CD8-positive, alpha-beta T cell (primary cell): ENCODE measurements at regions of chr20 and their contacts with region 1.

Region 1: GRCh38 chr20:63657937-63658748 is at the start of gene RTEL1:
- DNase-seq: peak; percentile 81 to 97 (median 88)
- ATAC-seq: peak; percentile 83
- H3K4me3 ChIP-seq: peak within 1 kb of the TSS; percentile 76 to 97
- H3K4me3 Mint-ChIP-seq: peak within 1 kb of the TSS; percentile 93
- H3K27ac ChIP-seq: peak within 1 kb of the TSS; percentile 72 to 75
- H3K27ac Mint-ChIP-seq: peak within 1 kb of the TSS; percentile 91
- H3K4me1 ChIP-seq: peaks cover 35% of the 10 kb centered on the region
- H3K4me1 Mint-ChIP-seq: peaks cover 36% of the 10 kb centered on the region
- H3K27me3 ChIP-seq: no peaks in the 10 kb centered on the region
- H3K27me3 Mint-ChIP-seq: no peaks in the 10 kb centered on the region
- CTCF ChIP-seq: no peak
- total RNA-seq, gene RTEL1: 21.4 to 24.9 TPM

Region 2: DNA sequence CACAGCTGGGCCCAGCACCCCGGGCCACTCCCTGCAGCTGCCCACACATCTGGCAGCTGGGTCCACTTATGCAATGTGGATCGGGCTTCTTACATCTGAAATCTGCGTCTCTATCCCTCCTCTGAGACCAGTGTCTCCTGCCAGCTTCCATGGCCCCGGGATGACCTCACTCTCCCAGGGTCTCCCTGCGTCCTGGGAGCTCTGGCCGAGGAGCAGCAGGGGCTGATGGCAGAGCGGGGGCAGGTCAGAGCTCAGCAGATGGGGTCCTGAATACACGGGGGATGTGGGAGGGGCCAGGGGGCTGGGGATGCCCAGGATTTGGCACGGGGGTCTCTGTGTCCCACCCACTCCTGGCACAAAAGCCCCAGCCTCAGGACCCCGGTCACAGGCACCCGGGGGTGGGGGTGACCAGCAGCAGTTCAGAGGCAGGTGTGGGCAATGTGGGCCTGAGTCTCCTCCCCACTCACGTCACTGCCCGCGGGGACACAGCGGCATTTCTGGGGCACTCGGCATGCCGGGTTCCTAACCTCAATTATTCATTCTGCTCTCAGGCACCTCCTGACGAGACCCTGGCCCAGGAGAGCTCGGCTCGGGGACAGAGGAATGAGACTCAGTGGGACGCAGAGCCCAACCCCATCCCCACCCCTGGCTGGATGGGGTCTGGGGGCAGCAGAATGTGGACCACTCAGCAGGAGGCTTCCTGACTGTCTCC is 313.4 kb before region 1 on chr20:
- CTCF ChIA-PET with region 1: no interaction called
- POLR2A ChIA-PET with region 1: no interaction called
- intact Hi-C with region 1: no loop called
- DNase-seq: peak in 1 of 9 experiments; percentile 17
- ATAC-seq: no peak
- H3K4me3 ChIP-seq: no peak overlapping the region
- H3K4me3 Mint-ChIP-seq: no peak overlapping the region
- H3K27ac ChIP-seq: no peak overlapping the region
- H3K27ac Mint-ChIP-seq: no peak overlapping the region
- H3K4me1 ChIP-seq: no peaks in the 10 kb centered on the region
- H3K4me1 Mint-ChIP-seq: no peaks in the 10 kb centered on the region
- H3K27me3 ChIP-seq: no peaks in the 10 kb centered on the region
- H3K27me3 Mint-ChIP-seq: peaks cover 10% of the 10 kb centered on the region
- CTCF ChIP-seq: no peak

Region 3: GRCh38 chr20:63529861-63530788 is 128.0 kb before region 1 on chr20:
- CTCF ChIA-PET with region 1: no interaction called
- POLR2A ChIA-PET with region 1: no interaction called
- intact Hi-C with region 1: no loop called
- DNase-seq: peak in 3 of 9 experiments; percentile 3 to 9 (median 6)
- ATAC-seq: no peak
- H3K4me3 ChIP-seq: no peak overlapping the region
- H3K4me3 Mint-ChIP-seq: no peak overlapping the region
- H3K27ac ChIP-seq: no peak overlapping the region
- H3K27ac Mint-ChIP-seq: no peak overlapping the region
- H3K4me1 ChIP-seq: no peaks in the 10 kb centered on the region
- H3K4me1 Mint-ChIP-seq: peaks cover 3% of the 10 kb centered on the region
- H3K27me3 ChIP-seq: no peaks in the 10 kb centered on the region
- H3K27me3 Mint-ChIP-seq: no peaks in the 10 kb centered on the region
- CTCF ChIP-seq: no peak

Region 4: GRCh38 chr20:63553227-63553932 is 104.8 kb before region 1 on chr20:
- CTCF ChIA-PET with region 1: no interaction called
- POLR2A ChIA-PET with region 1: no interaction called
- intact Hi-C with region 1: loop called in 1 of 2 experiments (anchors 1 kb)
- DNase-seq: peak; percentile 76 to 93 (median 87)
- ATAC-seq: peak; percentile 81
- H3K4me3 ChIP-seq: peak overlapping the region; percentile 51 to 55
- H3K4me3 Mint-ChIP-seq: peak overlapping the region; percentile 70
- H3K27ac ChIP-seq: peak overlapping the region; percentile 17 to 61
- H3K27ac Mint-ChIP-seq: peak overlapping the region; percentile 89
- H3K4me1 ChIP-seq: peaks cover 19% of the 10 kb centered on the region
- H3K4me1 Mint-ChIP-seq: peaks cover 20% of the 10 kb centered on the region
- H3K27me3 ChIP-seq: peaks cover 0 to 2% of the 10 kb centered on the region in 2 experiments
- H3K27me3 Mint-ChIP-seq: peaks cover 4% of the 10 kb centered on the region
- CTCF ChIP-seq: no peak

Region 5: GRCh38 chr20:63641792-63642544 is 16.2 kb before region 1 on chr20:
- CTCF ChIA-PET with region 1: interaction called, 13 read pairs
- POLR2A ChIA-PET with region 1: interaction called, 23 read pairs
- intact Hi-C with region 1: loop called in 1 of 2 experiments (anchors 2 kb)
- DNase-seq: peak; percentile 96 to 99 (median 97)
- ATAC-seq: peak; percentile 67
- H3K4me3 ChIP-seq: peak overlapping the region; percentile 90 to 98
- H3K4me3 Mint-ChIP-seq: peak overlapping the region; percentile 83
- H3K27ac ChIP-seq: peak overlapping the region; percentile 83 to 94
- H3K27ac Mint-ChIP-seq: peak overlapping the region; percentile 37
- H3K4me1 ChIP-seq: peaks cover 27% of the 10 kb centered on the region
- H3K4me1 Mint-ChIP-seq: peaks cover 24% of the 10 kb centered on the region
- H3K27me3 ChIP-seq: no peaks in the 10 kb centered on the region
- H3K27me3 Mint-ChIP-seq: no peaks in the 10 kb centered on the region
- CTCF ChIP-seq: peak; percentile 53

Region 6: GRCh38 chr20:63698739-63699465 is 40.8 kb after region 1 on chr20:
- CTCF ChIA-PET with region 1: no interaction called
- POLR2A ChIA-PET with region 1: no interaction called
- intact Hi-C with region 1: no loop called
- DNase-seq: peak in 2 of 9 experiments; percentile 35 to 39
- ATAC-seq: no peak
- H3K4me3 ChIP-seq: no peak overlapping the region
- H3K4me3 Mint-ChIP-seq: no peak overlapping the region
- H3K27ac ChIP-seq: no peak overlapping the region
- H3K27ac Mint-ChIP-seq: no peak overlapping the region
- H3K4me1 ChIP-seq: peaks cover 29% of the 10 kb centered on the region
- H3K4me1 Mint-ChIP-seq: peaks cover 8% of the 10 kb centered on the region
- H3K27me3 ChIP-seq: no peaks in the 10 kb centered on the region
- H3K27me3 Mint-ChIP-seq: no peaks in the 10 kb centered on the region
- CTCF ChIP-seq: no peak

Region 7: GRCh38 chr20:63791497-63792156 is 133.5 kb after region 1 on chr20:
- CTCF ChIA-PET with region 1: no interaction called
- POLR2A ChIA-PET with region 1: no interaction called
- intact Hi-C with region 1: no loop called
- DNase-seq: no peak
- ATAC-seq: no peak
- H3K4me3 ChIP-seq: no peak overlapping the region
- H3K4me3 Mint-ChIP-seq: no peak overlapping the region
- H3K27ac ChIP-seq: no peak overlapping the region
- H3K27ac Mint-ChIP-seq: no peak overlapping the region
- H3K4me1 ChIP-seq: no peaks in the 10 kb centered on the region
- H3K4me1 Mint-ChIP-seq: peaks cover 6% of the 10 kb centered on the region
- H3K27me3 ChIP-seq: no peaks in the 10 kb centered on the region
- H3K27me3 Mint-ChIP-seq: peaks cover 8% of the 10 kb centered on the region
- CTCF ChIP-seq: no peak

Region 8: GRCh38 chr20:63864847-63865640 is 206.9 kb after region 1 on chr20 and contains the start of gene TPD52L2:
- CTCF ChIA-PET with region 1: no interaction called
- POLR2A ChIA-PET with region 1: interaction called, 4 read pairs
- intact Hi-C with region 1: loop called (anchors 1 kb)
- DNase-seq: peak; percentile 95 to 99 (median 97)
- ATAC-seq: peak; percentile 89
- H3K4me3 ChIP-seq: peak within 1 kb of the TSS; percentile 62 to 95
- H3K4me3 Mint-ChIP-seq: peak within 1 kb of the TSS; percentile 98
- H3K27ac ChIP-seq: peak within 1 kb of the TSS; percentile 59 to 86
- H3K27ac Mint-ChIP-seq: peak within 1 kb of the TSS; percentile 97
- H3K4me1 ChIP-seq: peaks cover 23% of the 10 kb centered on the region
- H3K4me1 Mint-ChIP-seq: peaks cover 34% of the 10 kb centered on the region
- H3K27me3 ChIP-seq: no peaks in the 10 kb centered on the region
- H3K27me3 Mint-ChIP-seq: no peaks in the 10 kb centered on the region
- CTCF ChIP-seq: no peak
- total RNA-seq, gene TPD52L2: 18.7 to 19.4 TPM

Region 9: GRCh38 chr20:63980806-63981728 is 322.9 kb after region 1 on chr20 and contains the start of gene PRPF6:
- CTCF ChIA-PET with region 1: no interaction called
- POLR2A ChIA-PET with region 1: no interaction called
- intact Hi-C with region 1: loop called (anchors 2 to 5 kb)
- DNase-seq: peak; percentile 88 to 98 (median 95)
- ATAC-seq: peak; percentile 60
- H3K4me3 ChIP-seq: peak within 1 kb of the TSS; percentile 67 to 76
- H3K4me3 Mint-ChIP-seq: peak within 1 kb of the TSS; percentile 91
- H3K27ac ChIP-seq: peak within 1 kb of the TSS; percentile 85 to 91
- H3K27ac Mint-ChIP-seq: peak within 1 kb of the TSS; percentile 95
- H3K4me1 ChIP-seq: peaks cover 52% of the 10 kb centered on the region
- H3K4me1 Mint-ChIP-seq: peaks cover 66% of the 10 kb centered on the region
- H3K27me3 ChIP-seq: no peaks in the 10 kb centered on the region
- H3K27me3 Mint-ChIP-seq: no peaks in the 10 kb centered on the region
- CTCF ChIP-seq: peak; percentile 78
- total RNA-seq, gene PRPF6: 51.6 to 51.9 TPM